ENCODE measurements at regions of chr19 and their contacts with region 1.

Region 1: GRCh38 chr19:41439441-41440222 is at the start of gene DMAC2:
- DNase-seq: peak; percentile 94 to 98 (median 97)
- ATAC-seq: peak; percentile 96 to 99 (median 98)
- H3K4me3 ChIP-seq: peak within 1 kb of the TSS; percentile 29 to 90 (median 76)
- H3K27ac ChIP-seq: peak within 1 kb of the TSS; percentile 84 to 100 (median 94)
- H3K4me1 ChIP-seq: peaks cover 0 to 21% (median 12%) of the 10 kb centered on the region in 12 donors
- H3K27me3 ChIP-seq: no peaks in the 10 kb centered on the region
- CTCF ChIP-seq: peak; percentile 21 to 71 (median 47)
- POLR2A ChIP-seq: peak in 1 of 2 donors; percentile 46
- total RNA-seq, gene DMAC2: 67.9 to 138 (median 102) TPM

Region 2: DNA sequence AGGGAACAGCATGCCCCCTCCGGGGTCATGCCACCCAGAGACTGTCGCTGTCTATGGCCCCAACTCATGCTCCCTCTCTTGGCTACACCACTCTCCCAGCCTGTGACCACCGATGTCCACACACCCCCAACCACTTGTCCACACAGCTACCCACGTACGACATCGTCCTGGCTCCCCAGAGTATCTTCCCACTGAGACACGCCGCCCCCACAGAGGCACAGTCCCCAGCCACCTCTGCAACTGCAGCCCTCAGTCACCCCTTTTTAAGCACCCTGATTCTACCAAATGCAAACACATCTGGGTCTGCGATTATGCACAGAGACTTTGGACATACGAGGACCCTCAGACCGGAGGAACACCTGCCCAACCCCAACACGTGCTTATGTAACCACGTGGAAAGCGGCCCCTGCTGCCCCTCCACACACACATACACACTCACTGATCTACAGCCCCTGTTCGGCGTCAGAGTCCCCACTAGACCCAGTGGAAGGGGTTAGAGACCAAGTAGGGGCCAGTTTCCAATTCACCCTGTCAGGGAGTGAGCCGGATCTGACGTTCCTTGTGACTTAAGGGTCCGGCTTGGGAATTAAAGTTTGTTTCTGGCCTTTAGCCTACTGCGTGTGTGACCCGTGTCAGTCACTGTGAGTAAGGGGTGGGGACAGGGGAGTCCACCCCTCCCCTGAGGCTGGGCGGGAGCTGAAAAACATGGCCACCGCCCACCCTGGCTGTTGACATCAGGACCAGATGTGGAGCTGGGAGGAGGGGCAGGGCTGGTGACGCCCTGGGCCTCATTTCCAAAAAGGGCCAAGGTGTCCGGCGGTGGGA is 232.5 kb before region 1 on chr19:
- intact Hi-C with region 1: loop called in 7 of 10 experiments (anchors 5 to 10 kb)
- DNase-seq: peak; percentile 82 to 95 (median 85)
- ATAC-seq: peak; percentile 75 to 89 (median 82)
- H3K4me3 ChIP-seq: peak overlapping the region in 6 of 12 donors; percentile 10 to 36 (median 17)
- H3K27ac ChIP-seq: peak overlapping the region in 11 of 12 donors; percentile 32 to 74 (median 69)
- H3K4me1 ChIP-seq: peaks cover 0 to 9% (median 0%) of the 10 kb centered on the region in 12 donors
- H3K27me3 ChIP-seq: no peaks in the 10 kb centered on the region
- CTCF ChIP-seq: no peak
- POLR2A ChIP-seq: no peak

Region 3: GRCh38 chr19:41397086-41398049 is 42.3 kb before region 1 on chr19 and contains the starts of genes BCKDHA and EXOSC5:
- intact Hi-C with region 1: loop called in 7 of 10 experiments (anchors 1 to 5 kb)
- DNase-seq: peak; percentile 99 to 100 (median 99)
- ATAC-seq: peak; percentile 98 to 99 (median 98)
- H3K4me3 ChIP-seq: peak within 1 kb of the TSS; percentile 61 to 99 (median 90)
- H3K27ac ChIP-seq: peak within 1 kb of the TSS; percentile 83 to 98 (median 91)
- H3K4me1 ChIP-seq: peaks cover 4 to 47% (median 33%) of the 10 kb centered on the region in 12 donors
- H3K27me3 ChIP-seq: no peaks in the 10 kb centered on the region
- CTCF ChIP-seq: peak in 1 of 12 donors; percentile 8
- POLR2A ChIP-seq: peak in 1 of 2 donors; percentile 29
- total RNA-seq, gene BCKDHA: 32.0 to 149 (median 39.2) TPM
- total RNA-seq, gene EXOSC5: 9.6 to 18.6 (median 13.7) TPM

Region 4: DNA sequence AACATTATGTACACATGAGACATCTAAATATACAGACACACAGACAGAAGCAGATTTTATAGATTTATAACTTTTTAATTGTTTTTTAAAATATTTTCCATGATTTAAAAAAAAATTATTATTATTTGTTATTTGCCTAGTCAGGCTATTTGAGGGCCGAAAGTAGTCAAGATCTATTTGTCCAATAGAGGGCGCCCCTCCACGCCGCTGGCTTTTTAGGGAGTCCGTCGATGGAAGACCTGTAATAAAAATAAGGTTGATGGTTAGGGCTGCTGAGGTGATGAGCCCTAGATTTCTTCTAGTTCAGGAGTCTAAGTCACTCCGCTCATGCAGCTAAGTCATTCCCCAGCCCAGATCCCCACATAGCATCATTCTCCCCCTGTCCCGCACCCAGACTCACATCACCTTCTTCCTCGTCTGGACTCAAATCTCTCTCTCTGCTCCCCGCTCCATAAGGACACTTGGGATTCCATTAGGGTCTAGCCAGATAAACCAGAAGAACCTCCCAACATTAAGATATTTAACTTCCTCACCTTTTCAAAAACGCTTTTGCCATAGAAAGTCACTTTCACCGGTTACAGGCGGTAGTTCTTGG is 102.5 kb after region 1 on chr19:
- intact Hi-C with region 1: loop called in 1 of 10 experiments (anchors 10 kb)
- DNase-seq: peak in 4 of 5 donors; percentile 47 to 83 (median 53)
- ATAC-seq: no peak
- H3K4me3 ChIP-seq: no peak overlapping the region
- H3K27ac ChIP-seq: no peak overlapping the region
- H3K4me1 ChIP-seq: peaks cover 0 to 30% (median 3%) of the 10 kb centered on the region in 12 donors
- H3K27me3 ChIP-seq: peaks cover 0 to 14% (median 0%) of the 10 kb centered on the region in 9 donors
- CTCF ChIP-seq: peak; percentile 44 to 78 (median 64)
- POLR2A ChIP-seq: no peak